ENCODE measurements at regions of chr5 and their contacts with region 1.

Region 1: DNA sequence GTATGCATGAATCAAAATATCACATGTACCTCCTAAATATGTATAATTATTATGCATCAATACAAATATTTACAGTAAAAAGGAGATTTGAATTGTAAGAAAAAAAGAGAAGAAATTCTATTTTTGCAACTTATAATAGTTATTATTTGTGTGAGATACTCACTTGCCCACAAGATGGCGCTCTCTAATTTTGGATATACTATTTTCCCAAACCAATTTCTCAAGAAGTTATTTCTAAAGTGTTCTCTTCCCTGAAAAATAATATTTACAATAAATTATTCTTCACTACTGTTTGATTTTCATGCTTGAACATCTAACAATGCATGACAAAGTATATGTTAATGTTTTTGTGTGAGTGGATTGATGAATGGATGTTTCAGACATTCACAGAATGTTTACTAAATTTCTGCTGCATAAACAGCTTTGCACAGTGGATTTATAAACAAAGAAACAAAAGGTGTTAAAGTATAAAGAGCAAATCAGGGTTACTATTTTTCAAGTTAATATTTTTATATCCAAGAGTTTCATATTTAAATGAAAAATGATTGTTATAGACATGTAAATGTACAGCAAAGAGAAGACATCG is 503.4 kb downstream of the PDE4D start:
- DNase-seq: peak; percentile 27
- ATAC-seq: no peak
- H3K4me3 Mint-ChIP-seq: no peak overlapping the region
- H3K27ac Mint-ChIP-seq: no peak overlapping the region
- H3K4me1 Mint-ChIP-seq: no peaks in the 10 kb centered on the region
- H3K27me3 Mint-ChIP-seq: peaks cover 6% of the 10 kb centered on the region

Region 2: DNA sequence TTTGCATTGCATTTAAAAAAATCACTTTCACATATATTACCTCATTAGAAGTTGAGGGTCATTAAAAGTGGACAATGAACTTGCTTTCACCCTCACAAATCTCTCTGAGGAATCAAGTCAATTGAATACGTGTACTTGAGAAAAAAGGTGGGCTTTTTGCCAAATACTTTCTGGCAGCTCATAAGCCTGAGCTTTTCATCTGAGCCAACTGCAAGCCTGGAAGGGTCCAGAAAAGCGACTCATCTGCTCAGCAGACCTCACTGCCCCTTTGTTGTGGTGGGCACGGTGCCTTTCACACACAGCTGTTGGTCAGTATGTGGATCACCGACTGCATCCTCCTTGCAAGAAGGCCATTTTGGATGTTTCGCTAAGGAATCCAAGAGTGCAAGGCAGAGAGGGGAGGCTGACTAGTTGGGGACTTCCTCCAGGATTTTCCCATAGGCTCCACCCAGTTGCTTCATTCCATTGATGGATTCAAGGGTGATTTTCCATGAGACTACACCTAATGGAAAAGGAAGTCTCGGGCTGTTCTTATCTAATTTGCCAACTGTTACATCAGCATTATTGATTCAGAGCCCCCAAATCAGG is 61.4 kb before region 1 on chr5:
- CTCF ChIA-PET with region 1: no interaction called
- POLR2A ChIA-PET with region 1: no interaction called
- intact Hi-C with region 1: no loop called
- DNase-seq: no peak
- ATAC-seq: no peak
- H3K4me3 Mint-ChIP-seq: no peak overlapping the region
- H3K27ac Mint-ChIP-seq: no peak overlapping the region
- H3K4me1 Mint-ChIP-seq: no peaks in the 10 kb centered on the region
- H3K27me3 Mint-ChIP-seq: no peaks in the 10 kb centered on the region

Region 3: DNA sequence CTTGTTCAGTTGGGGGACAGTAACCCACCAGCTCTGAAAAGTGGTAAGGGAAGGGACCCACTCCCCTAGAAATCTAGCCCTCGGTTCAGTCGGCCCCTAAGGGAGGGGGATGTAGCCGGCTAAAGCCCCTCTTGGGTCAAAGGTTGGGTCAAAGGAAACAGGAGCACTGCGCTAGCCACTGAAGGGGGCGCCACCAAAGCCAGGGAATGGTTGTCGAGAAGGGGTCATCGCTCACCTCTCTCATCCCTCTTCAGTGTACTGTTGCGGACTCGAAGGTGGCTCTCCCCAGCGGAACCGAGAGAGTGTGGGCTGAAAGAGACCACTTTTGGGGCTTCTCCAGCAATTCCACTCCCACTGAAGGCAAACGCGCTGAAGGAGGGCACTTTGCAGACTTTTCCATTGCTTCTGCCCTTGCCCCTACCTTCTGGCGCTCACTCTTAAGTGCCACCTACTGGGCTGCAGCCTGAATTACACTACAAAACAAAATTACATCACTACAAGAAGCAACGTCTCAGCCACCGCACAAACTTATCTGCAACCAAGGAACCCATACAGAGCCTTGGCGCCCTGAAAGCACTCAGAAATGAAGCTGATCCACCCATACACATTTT is 106.5 kb after region 1 on chr5:
- CTCF ChIA-PET with region 1: interaction called, 19 read pairs
- POLR2A ChIA-PET with region 1: no interaction called
- intact Hi-C with region 1: loop called (anchors 1 kb)
- DNase-seq: peak; percentile 33
- ATAC-seq: peak; percentile 64
- H3K4me3 Mint-ChIP-seq: no peak overlapping the region
- H3K27ac Mint-ChIP-seq: no peak overlapping the region
- H3K4me1 Mint-ChIP-seq: no peaks in the 10 kb centered on the region
- H3K27me3 Mint-ChIP-seq: peaks cover 10% of the 10 kb centered on the region

Region 4: GRCh38 chr5:59724482-59725391 is 334.6 kb after region 1 on chr5:
- CTCF ChIA-PET with region 1: no interaction called
- POLR2A ChIA-PET with region 1: no interaction called
- intact Hi-C with region 1: loop called in 1 of 2 experiments (anchors 2 kb)
- DNase-seq: peak; percentile 31
- ATAC-seq: no peak
- H3K4me3 Mint-ChIP-seq: no peak overlapping the region
- H3K27ac Mint-ChIP-seq: no peak overlapping the region
- H3K4me1 Mint-ChIP-seq: no peaks in the 10 kb centered on the region
- H3K27me3 Mint-ChIP-seq: peaks cover 3% of the 10 kb centered on the region